ENCODE measurements at regions of chr3 and their contacts with region 1.

Region 1: GRCh38 chr3:108552267-108553159 is 36.7 kb downstream of the CIP2A start:
- DNase-seq: peak; percentile 12
- CTCF ChIP-seq: peak; percentile 55

Region 2: GRCh38 chr3:108448593-108448992 is 103.9 kb before region 1 on chr3:
- CTCF ChIA-PET with region 1: no interaction called
- POLR2A ChIA-PET with region 1: no interaction called
- DNase-seq: no peak
- CTCF ChIP-seq: no peak

Region 3: GRCh38 chr3:108489771-108490170 is 62.7 kb before region 1 on chr3:
- CTCF ChIA-PET with region 1: interaction called, 217 read pairs
- POLR2A ChIA-PET with region 1: no interaction called
- DNase-seq: peak; percentile 53
- CTCF ChIP-seq: peak; percentile 74

Region 4: GRCh38 chr3:108505811-108506210 is 46.7 kb before region 1 on chr3:
- CTCF ChIA-PET with region 1: interaction called, 27 read pairs
- POLR2A ChIA-PET with region 1: no interaction called
- DNase-seq: no peak
- CTCF ChIP-seq: peak; percentile 17

Region 5: GRCh38 chr3:108538083-108538482 is 14.4 kb before region 1 on chr3:
- CTCF ChIA-PET with region 1: interaction called, 55 read pairs
- POLR2A ChIA-PET with region 1: no interaction called
- DNase-seq: no peak
- CTCF ChIP-seq: no peak

Region 6: GRCh38 chr3:108589146-108589997 is 36.9 kb after region 1 on chr3 and contains the starts of genes CIP2A and DZIP3:
- CTCF ChIA-PET with region 1: interaction called, 17 read pairs
- POLR2A ChIA-PET with region 1: no interaction called
- DNase-seq: peak; percentile 92
- CTCF ChIP-seq: no peak

Region 7: GRCh38 chr3:108620003-108620704 is 67.6 kb after region 1 on chr3:
- CTCF ChIA-PET with region 1: no interaction called
- POLR2A ChIA-PET with region 1: no interaction called
- DNase-seq: no peak
- CTCF ChIP-seq: no peak

Measured in GM10248 (cell line).